Heart left ventricle (tissue), 16 donors: ENCODE measurements at regions of chr4 and their contacts with region 1.

Region 1: GRCh38 chr4:96260064-96260682 is 420.3 kb downstream of the PDHA2 start:
- DNase-seq: no peak
- ATAC-seq: no peak
- H3K4me3 ChIP-seq: no peak overlapping the region
- H3K27ac ChIP-seq: no peak overlapping the region
- H3K4me1 ChIP-seq: no peaks in the 10 kb centered on the region
- H3K27me3 ChIP-seq: no peaks in the 10 kb centered on the region
- CTCF ChIP-seq: no peak
- POLR2A ChIP-seq: no peak

Region 2: GRCh38 chr4:96164814-96165351 is 95.3 kb before region 1 on chr4:
- intact Hi-C with region 1: no loop called
- DNase-seq: no peak
- ATAC-seq: no peak
- H3K4me3 ChIP-seq: no peak overlapping the region
- H3K27ac ChIP-seq: no peak overlapping the region
- H3K4me1 ChIP-seq: no peaks in the 10 kb centered on the region
- H3K27me3 ChIP-seq: no peaks in the 10 kb centered on the region
- CTCF ChIP-seq: no peak
- POLR2A ChIP-seq: no peak

Region 3: GRCh38 chr4:96247096-96247495 is 13.1 kb before region 1 on chr4:
- intact Hi-C with region 1: no loop called
- DNase-seq: no peak
- ATAC-seq: no peak
- H3K4me3 ChIP-seq: no peak overlapping the region
- H3K27ac ChIP-seq: no peak overlapping the region
- H3K4me1 ChIP-seq: no peaks in the 10 kb centered on the region
- H3K27me3 ChIP-seq: no peaks in the 10 kb centered on the region
- CTCF ChIP-seq: no peak
- POLR2A ChIP-seq: no peak

Region 4: GRCh38 chr4:96652158-96652557 is 392.0 kb after region 1 on chr4:
- intact Hi-C with region 1: loop called in 1 of 10 experiments (anchors 5 kb)
- DNase-seq: no peak
- ATAC-seq: no peak
- H3K4me3 ChIP-seq: no peak overlapping the region
- H3K27ac ChIP-seq: no peak overlapping the region
- H3K4me1 ChIP-seq: no peaks in the 10 kb centered on the region
- H3K27me3 ChIP-seq: no peaks in the 10 kb centered on the region
- CTCF ChIP-seq: no peak
- POLR2A ChIP-seq: no peak